Naive thymus-derived CD4-positive, alpha-beta T cell (primary cell): ENCODE measurements at regions of chr1 and their contacts with region 1.

Region 1: DNA sequence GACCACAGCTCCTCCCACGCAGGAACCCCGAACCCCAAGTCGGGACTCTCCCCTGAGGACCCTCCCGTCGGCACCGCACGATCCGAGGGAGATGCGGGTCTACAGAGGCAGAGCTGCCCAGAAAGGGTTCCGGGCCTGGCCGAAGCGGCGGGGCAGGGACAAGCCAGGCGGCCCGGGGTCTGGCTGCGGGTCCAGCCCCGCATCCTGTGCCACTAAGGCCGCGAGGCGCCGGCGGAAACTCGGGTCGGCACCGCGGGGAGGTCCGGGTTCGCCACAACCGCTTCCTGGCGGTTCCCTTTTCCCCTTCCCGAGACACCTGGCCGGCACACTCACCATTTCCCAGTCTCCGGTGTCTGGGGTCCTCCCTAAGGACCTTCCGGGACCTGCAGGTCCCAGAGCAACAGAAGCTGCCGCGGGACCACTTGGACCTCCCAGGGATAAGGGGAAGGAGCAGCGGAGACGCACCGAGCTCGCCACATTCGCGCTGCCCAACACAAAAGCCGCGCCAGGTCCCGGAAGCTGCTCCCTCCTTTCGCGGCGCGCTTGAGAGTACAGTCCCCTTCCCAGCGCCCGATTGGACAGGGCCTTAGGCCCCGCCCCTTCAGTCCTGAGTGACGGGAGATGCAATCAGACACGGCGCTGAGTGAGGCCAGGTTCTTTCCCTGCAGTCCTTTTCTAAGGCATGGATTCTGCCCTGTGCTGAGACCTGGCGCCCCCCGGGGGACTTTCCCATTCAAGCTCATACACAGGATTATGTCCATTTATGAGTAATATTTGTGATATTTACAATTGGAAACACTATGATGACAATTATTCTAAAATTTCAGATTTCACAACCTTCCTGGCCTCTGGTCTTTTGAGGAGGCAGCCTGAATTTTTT is at the start of gene ZNF670:
- DNase-seq: peak; percentile 64 to 89 (median 76)
- ATAC-seq: peak; percentile 99
- H3K4me3 ChIP-seq: peak within 1 kb of the TSS; percentile 72
- H3K4me3 Mint-ChIP-seq: peak within 1 kb of the TSS; percentile 84 to 95 (median 92)
- H3K27ac ChIP-seq: peak within 1 kb of the TSS; percentile 69
- H3K27ac Mint-ChIP-seq: peak within 1 kb of the TSS; percentile 71 to 91 (median 82)
- H3K4me1 ChIP-seq: peaks cover 6 to 8% of the 10 kb centered on the region in 2 donors
- H3K4me1 Mint-ChIP-seq: peaks cover 9 to 38% (median 32%) of the 10 kb centered on the region in 7 donors
- H3K27me3 ChIP-seq: no peaks in the 10 kb centered on the region
- H3K27me3 Mint-ChIP-seq: peaks cover 0 to 12% (median 8%) of the 10 kb centered on the region in 5 donors
- total RNA-seq, gene ZNF670: 0.56 to 4.0 (median 1.1) TPM

Region 2: DNA sequence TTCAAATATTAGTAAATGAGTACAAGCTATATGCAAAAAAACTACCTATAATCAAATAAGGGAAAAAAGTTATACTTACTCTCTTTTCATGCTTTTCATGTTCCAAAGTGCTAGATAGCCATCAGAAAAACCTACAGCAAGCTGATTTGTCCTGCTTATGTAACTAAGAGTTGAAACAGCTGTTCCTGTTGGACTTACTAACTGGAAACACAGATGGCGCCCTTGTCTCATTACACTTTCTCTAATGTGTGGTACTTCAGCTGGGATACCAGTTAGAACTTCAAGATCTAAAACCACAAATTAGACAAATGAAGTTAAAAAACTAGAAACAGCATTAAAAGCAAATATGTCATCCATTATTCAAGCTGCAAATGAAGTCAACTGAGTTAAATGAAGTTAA is 171.0 kb before region 1 on chr1:
- CTCF ChIA-PET with region 1: interaction called, 4 read pairs
- POLR2A ChIA-PET with region 1: no interaction called
- intact Hi-C with region 1: loop called in 1 of 2 experiments (anchors 1 kb)
- DNase-seq: peak in 4 of 9 donors; percentile 6 to 32 (median 22)
- ATAC-seq: peak; percentile 58
- H3K4me3 ChIP-seq: no peak overlapping the region
- H3K4me3 Mint-ChIP-seq: no peak overlapping the region
- H3K27ac ChIP-seq: no peak overlapping the region
- H3K27ac Mint-ChIP-seq: peak overlapping the region in 2 of 9 donors; percentile 25 to 51
- H3K4me1 ChIP-seq: no peaks in the 10 kb centered on the region
- H3K4me1 Mint-ChIP-seq: peaks cover 2 to 28% (median 11%) of the 10 kb centered on the region in 7 donors
- H3K27me3 ChIP-seq: no peaks in the 10 kb centered on the region
- H3K27me3 Mint-ChIP-seq: no peaks in the 10 kb centered on the region

Region 3: DNA sequence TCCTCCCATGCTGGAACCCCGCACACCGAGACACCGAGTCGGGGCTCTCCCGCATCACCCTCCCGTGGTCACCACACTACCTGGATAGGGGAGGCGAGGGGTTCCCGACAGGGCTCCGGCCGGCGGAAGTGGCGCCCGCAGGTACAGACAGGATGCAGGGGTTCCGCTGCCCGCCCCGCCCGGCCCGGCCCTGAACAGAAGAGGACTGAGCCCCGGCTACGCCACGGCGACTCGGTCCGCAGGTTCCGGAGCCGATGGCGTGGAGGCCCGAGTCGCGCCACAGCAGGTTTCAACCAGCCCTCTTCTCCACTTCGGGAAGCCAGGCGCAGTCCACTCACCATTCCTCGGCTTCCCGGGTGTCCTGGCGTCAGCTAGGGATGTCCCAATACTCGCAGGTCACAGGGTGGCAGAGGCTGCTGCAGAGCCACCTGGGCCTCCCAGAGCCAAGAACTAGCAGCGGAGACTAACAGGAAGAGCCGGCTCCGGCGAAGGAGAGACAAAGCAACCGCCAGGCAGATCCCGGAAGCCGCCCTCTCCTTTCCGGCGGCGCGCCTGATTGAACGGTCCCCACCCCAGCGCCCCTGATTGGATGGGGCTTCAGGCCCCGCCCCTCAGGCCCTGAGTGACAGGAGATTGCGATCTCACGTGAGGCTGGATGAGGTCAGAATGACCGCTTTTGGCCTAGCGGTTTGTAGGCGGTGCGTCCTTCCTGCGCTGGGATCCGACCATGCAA is 25.5 kb after region 1 on chr1 and contains the start of gene ZNF669:
- CTCF ChIA-PET with region 1: no interaction called
- POLR2A ChIA-PET with region 1: interaction called, 11 read pairs
- intact Hi-C with region 1: loop called (anchors 1 kb)
- DNase-seq: peak; percentile 84 to 91 (median 89)
- ATAC-seq: peak; percentile 99
- H3K4me3 ChIP-seq: peak within 1 kb of the TSS; percentile 96
- H3K4me3 Mint-ChIP-seq: peak within 1 kb of the TSS; percentile 83 to 93 (median 91)
- H3K27ac ChIP-seq: peak within 1 kb of the TSS; percentile 82
- H3K27ac Mint-ChIP-seq: peak within 1 kb of the TSS; percentile 70 to 93 (median 81)
- H3K4me1 ChIP-seq: peaks cover 3 to 4% of the 10 kb centered on the region in 2 donors
- H3K4me1 Mint-ChIP-seq: peaks cover 6 to 24% (median 16%) of the 10 kb centered on the region in 7 donors
- H3K27me3 ChIP-seq: no peaks in the 10 kb centered on the region
- H3K27me3 Mint-ChIP-seq: peaks cover 15 to 25% (median 21%) of the 10 kb centered on the region in 5 donors
- total RNA-seq, gene ZNF669: 7.9 to 15.8 (median 11.5) TPM

Region 4: DNA sequence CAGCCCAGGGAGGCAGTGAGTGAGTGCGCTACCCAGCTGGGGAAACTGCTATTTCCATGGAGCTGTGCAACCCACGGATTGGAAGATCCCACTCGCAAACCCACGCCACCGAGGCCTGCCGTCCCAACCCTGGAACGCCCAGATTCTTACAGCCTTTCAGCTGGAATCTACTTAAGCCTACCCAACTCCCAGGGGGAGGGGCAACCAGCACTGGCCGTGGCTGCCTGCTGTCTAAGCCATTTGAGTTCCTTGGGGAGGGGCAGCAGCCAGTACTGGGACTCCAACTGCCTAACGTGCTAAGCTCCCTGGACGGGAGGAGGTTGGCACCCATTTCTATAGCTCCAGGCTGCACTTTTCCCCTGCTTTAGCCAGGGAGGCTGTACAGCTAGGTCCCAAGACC is 52.7 kb after region 1 on chr1:
- CTCF ChIA-PET with region 1: no interaction called
- POLR2A ChIA-PET with region 1: no interaction called
- intact Hi-C with region 1: no loop called
- DNase-seq: no peak
- ATAC-seq: no peak
- H3K4me3 ChIP-seq: no peak overlapping the region
- H3K4me3 Mint-ChIP-seq: no peak overlapping the region
- H3K27ac ChIP-seq: no peak overlapping the region
- H3K27ac Mint-ChIP-seq: no peak overlapping the region
- H3K4me1 ChIP-seq: no peaks in the 10 kb centered on the region
- H3K4me1 Mint-ChIP-seq: peaks cover 6 to 15% (median 8%) of the 10 kb centered on the region in 7 donors
- H3K27me3 ChIP-seq: no peaks in the 10 kb centered on the region
- H3K27me3 Mint-ChIP-seq: no peaks in the 10 kb centered on the region

Region 5: GRCh38 chr1:247165674-247166073 is 87.2 kb after region 1 on chr1:
- CTCF ChIA-PET with region 1: no interaction called
- POLR2A ChIA-PET with region 1: no interaction called
- intact Hi-C with region 1: loop called in 1 of 2 experiments (anchors 5 kb)
- DNase-seq: no peak
- ATAC-seq: no peak
- H3K4me3 ChIP-seq: no peak overlapping the region
- H3K4me3 Mint-ChIP-seq: peak overlapping the region in 1 of 10 donors; percentile 24
- H3K27ac ChIP-seq: no peak overlapping the region
- H3K27ac Mint-ChIP-seq: no peak overlapping the region
- H3K4me1 ChIP-seq: no peaks in the 10 kb centered on the region
- H3K4me1 Mint-ChIP-seq: peaks cover 13 to 52% (median 44%) of the 10 kb centered on the region in 7 donors
- H3K27me3 ChIP-seq: no peaks in the 10 kb centered on the region
- H3K27me3 Mint-ChIP-seq: no peaks in the 10 kb centered on the region

Region 6: GRCh38 chr1:247331172-247331991 is 252.9 kb after region 1 on chr1 and contains the start of gene ZNF496:
- CTCF ChIA-PET with region 1: no interaction called
- POLR2A ChIA-PET with region 1: no interaction called
- intact Hi-C with region 1: loop called in 1 of 2 experiments (anchors 5 kb)
- DNase-seq: peak; percentile 46 to 77 (median 67)
- ATAC-seq: peak; percentile 76
- H3K4me3 ChIP-seq: peak within 1 kb of the TSS; percentile 64
- H3K4me3 Mint-ChIP-seq: peak within 1 kb of the TSS; percentile 91 to 99 (median 94)
- H3K27ac ChIP-seq: peak within 1 kb of the TSS; percentile 72
- H3K27ac Mint-ChIP-seq: peak within 1 kb of the TSS in 8 of 9 donors; percentile 77 to 92 (median 86)
- H3K4me1 ChIP-seq: peaks cover 6 to 14% of the 10 kb centered on the region in 2 donors
- H3K4me1 Mint-ChIP-seq: peaks cover 13 to 43% (median 29%) of the 10 kb centered on the region in 7 donors
- H3K27me3 ChIP-seq: no peaks in the 10 kb centered on the region
- H3K27me3 Mint-ChIP-seq: no peaks in the 10 kb centered on the region
- total RNA-seq, gene ZNF496: 9.5 to 25.1 (median 17.3) TPM

Region 7: GRCh38 chr1:247373721-247374141 is 295.2 kb after region 1 on chr1:
- CTCF ChIA-PET with region 1: interaction called, 3 read pairs
- POLR2A ChIA-PET with region 1: no interaction called
- intact Hi-C with region 1: loop called in 1 of 2 experiments (anchors 5 kb)
- DNase-seq: peak; percentile 37 to 64 (median 48)
- ATAC-seq: peak; percentile 84
- H3K4me3 ChIP-seq: peak overlapping the region; percentile 46
- H3K4me3 Mint-ChIP-seq: peak overlapping the region in 9 of 10 donors; percentile 14 to 70 (median 58)
- H3K27ac ChIP-seq: no peak overlapping the region
- H3K27ac Mint-ChIP-seq: no peak overlapping the region
- H3K4me1 ChIP-seq: no peaks in the 10 kb centered on the region
- H3K4me1 Mint-ChIP-seq: peaks cover 0 to 10% (median 7%) of the 10 kb centered on the region in 7 donors
- H3K27me3 ChIP-seq: no peaks in the 10 kb centered on the region
- H3K27me3 Mint-ChIP-seq: peaks cover 4 to 19% (median 6%) of the 10 kb centered on the region in 5 donors

Region 8: GRCh38 chr1:247471445-247472016 is 393.0 kb after region 1 on chr1:
- CTCF ChIA-PET with region 1: no interaction called
- POLR2A ChIA-PET with region 1: no interaction called
- intact Hi-C with region 1: no loop called
- DNase-seq: no peak
- ATAC-seq: no peak
- H3K4me3 ChIP-seq: no peak overlapping the region
- H3K4me3 Mint-ChIP-seq: no peak overlapping the region
- H3K27ac ChIP-seq: no peak overlapping the region
- H3K27ac Mint-ChIP-seq: no peak overlapping the region
- H3K4me1 ChIP-seq: no peaks in the 10 kb centered on the region
- H3K4me1 Mint-ChIP-seq: peaks cover 0 to 1% (median 0%) of the 10 kb centered on the region in 7 donors
- H3K27me3 ChIP-seq: no peaks in the 10 kb centered on the region
- H3K27me3 Mint-ChIP-seq: peaks cover 0 to 13% (median 2%) of the 10 kb centered on the region in 5 donors

Region 9: DNA sequence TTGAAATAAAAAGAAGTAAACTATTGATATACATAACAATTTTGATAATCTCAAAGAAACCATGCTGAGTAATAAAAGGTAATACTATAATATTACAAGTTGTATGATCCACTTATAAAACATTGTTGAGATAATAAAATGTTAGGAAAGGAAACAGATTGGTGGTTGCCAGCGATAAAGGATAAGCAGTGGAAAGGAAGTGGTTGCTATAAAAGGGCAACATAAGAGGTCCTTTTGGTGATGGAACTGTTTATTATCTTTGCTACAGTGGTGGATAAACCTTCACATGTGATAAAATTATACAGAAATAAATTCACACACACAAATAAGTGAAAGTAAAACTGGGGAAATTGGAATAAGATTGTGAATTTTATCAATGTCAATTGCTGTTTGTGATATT is 622.8 kb after region 1 on chr1:
- CTCF ChIA-PET with region 1: no interaction called
- POLR2A ChIA-PET with region 1: no interaction called
- intact Hi-C with region 1: no loop called
- DNase-seq: no peak
- ATAC-seq: no peak
- H3K4me3 ChIP-seq: no peak overlapping the region
- H3K4me3 Mint-ChIP-seq: no peak overlapping the region
- H3K27ac ChIP-seq: no peak overlapping the region
- H3K27ac Mint-ChIP-seq: no peak overlapping the region
- H3K4me1 ChIP-seq: no peaks in the 10 kb centered on the region
- H3K4me1 Mint-ChIP-seq: no peaks in the 10 kb centered on the region
- H3K27me3 ChIP-seq: no peaks in the 10 kb centered on the region
- H3K27me3 Mint-ChIP-seq: peaks cover 0 to 17% (median 7%) of the 10 kb centered on the region in 5 donors